Common myeloid progenitor, CD34-positive (primary cell): ENCODE measurements at regions of chr7 and their contacts with region 1.

Region 1: GRCh38 chr7:101502466-101503098 is 126.5 kb downstream of the MYL10 start:
- DNase-seq: no peak
- H3K4me3 ChIP-seq: no peak overlapping the region
- H3K27ac ChIP-seq: no peak overlapping the region
- H3K4me1 ChIP-seq: peaks cover 0 to 12% (median 6%) of the 10 kb centered on the region in 4 experiments
- H3K27me3 ChIP-seq: no peaks in the 10 kb centered on the region

Region 2: DNA sequence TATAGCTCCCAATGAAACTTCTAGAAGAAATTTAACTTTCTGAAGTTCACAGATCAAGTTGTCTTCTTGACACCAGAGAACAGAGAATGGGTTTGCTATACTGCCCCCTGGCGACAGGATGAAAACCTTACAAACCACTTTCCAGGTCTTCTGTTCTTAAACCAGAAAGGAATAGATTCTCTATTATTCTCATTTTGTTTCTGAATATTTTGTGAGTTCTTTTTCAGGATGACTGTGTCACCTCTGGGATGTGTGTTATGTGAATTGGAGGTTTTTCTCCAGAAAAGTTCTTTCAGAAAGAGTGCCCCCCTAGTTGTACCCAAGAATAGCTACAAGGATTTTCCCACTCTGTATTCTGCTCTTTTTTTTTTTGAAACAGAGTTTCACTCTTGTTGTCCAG is 187.2 kb before region 1 on chr7:
- CTCF ChIA-PET with region 1: no interaction called
- POLR2A ChIA-PET with region 1: no interaction called
- DNase-seq: peak; percentile 58 to 83 (median 75)
- H3K4me3 ChIP-seq: no peak overlapping the region
- H3K27ac ChIP-seq: no peak overlapping the region
- H3K4me1 ChIP-seq: no peaks in the 10 kb centered on the region
- H3K27me3 ChIP-seq: no peaks in the 10 kb centered on the region

Region 3: GRCh38 chr7:101516851-101517250 is 14.3 kb after region 1 on chr7:
- CTCF ChIA-PET with region 1: interaction called, 10 read pairs
- POLR2A ChIA-PET with region 1: no interaction called
- DNase-seq: no peak
- H3K4me3 ChIP-seq: no peak overlapping the region
- H3K27ac ChIP-seq: no peak overlapping the region
- H3K4me1 ChIP-seq: no peaks in the 10 kb centered on the region
- H3K27me3 ChIP-seq: peaks cover 0 to 2% (median 0%) of the 10 kb centered on the region in 5 experiments